Mammary epithelial cell (primary cell): ENCODE measurements at regions of chr2 and their contacts with region 1.

Region 1: DNA sequence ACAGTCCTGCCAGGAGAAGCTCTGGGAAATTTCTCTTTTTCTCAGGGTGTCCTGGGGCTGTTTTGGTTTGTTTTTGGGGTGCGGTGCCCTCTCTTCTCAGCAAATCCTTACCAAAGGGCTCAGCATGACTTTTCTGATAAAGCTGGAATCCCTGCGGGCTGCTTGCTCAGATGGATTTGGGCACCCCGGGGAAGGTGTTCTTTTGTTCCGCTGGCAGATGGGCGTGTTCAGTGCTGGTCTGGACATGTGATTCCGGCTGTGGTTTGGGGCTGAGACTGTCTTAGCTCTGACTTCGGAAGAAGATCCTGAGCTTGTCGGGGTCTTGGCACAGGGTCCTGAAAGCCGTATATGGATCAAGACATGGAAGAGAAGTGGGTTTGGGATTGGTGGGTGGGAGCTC is 134.2 kb upstream of the SPRED2 start:
- DNase-seq: peak; percentile 88
- H3K4me3 ChIP-seq: peak overlapping the region; percentile 43 to 67 (median 49)
- H3K27ac ChIP-seq: peak overlapping the region; percentile 96
- H3K4me1 ChIP-seq: peaks cover 19% of the 10 kb centered on the region
- H3K27me3 ChIP-seq: no peaks in the 10 kb centered on the region
- CTCF ChIP-seq: no peak

Region 2: DNA sequence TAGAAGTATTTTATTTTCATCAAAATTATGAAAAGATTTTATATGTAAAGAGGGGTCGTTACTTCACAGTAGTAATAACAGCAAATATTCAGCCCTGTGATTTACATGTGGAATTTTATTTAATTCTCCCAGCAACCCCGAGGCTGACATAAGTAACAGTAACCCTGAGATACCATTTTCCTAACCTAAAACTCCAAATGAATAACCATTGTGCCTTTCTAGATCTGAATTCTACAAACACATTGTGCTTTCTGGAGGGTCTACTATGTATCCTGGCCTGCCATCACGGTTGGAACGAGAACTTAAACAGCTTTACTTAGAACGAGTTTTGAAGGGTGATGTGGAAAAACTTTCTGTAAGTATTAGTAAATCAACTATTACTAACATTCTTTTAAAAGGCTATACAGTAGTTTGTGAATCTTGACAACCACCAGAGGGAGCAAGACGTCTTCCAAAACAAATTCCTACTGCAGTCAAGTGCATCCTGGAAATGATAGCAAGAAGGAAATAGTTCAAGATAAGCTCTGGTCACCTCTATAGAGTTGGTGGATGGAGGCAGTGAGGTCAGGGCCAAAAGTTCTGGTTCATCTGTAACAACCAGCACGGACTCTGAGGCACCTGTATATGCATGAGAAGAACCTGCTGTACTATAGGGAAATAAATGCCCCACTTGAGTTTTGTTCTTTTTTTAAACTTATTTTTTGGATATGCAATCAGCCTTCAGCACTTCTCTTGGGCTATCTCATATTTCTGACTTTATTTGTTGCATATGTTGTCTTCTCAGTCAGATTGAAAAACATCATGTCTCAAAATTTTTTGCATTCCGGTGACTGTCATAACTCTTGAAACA is 301.6 kb before region 1 on chr2:
- CTCF ChIA-PET with region 1: no interaction called
- dilution Hi-C with region 1: no loop called
- in situ Hi-C with region 1: loop called in 1 of 2 experiments (anchors 5 kb)
- intact Hi-C with region 1: no loop called
- DNase-seq: peak; percentile 51
- H3K4me3 ChIP-seq: no peak overlapping the region
- H3K27ac ChIP-seq: no peak overlapping the region
- H3K4me1 ChIP-seq: no peaks in the 10 kb centered on the region
- H3K27me3 ChIP-seq: no peaks in the 10 kb centered on the region
- CTCF ChIP-seq: peak; percentile 53 to 64

Region 3: GRCh38 chr2:65320042-65320725 is 246.4 kb before region 1 on chr2:
- CTCF ChIA-PET with region 1: no interaction called
- dilution Hi-C with region 1: no loop called
- in situ Hi-C with region 1: no loop called
- intact Hi-C with region 1: loop called (anchors 2 kb)
- DNase-seq: peak; percentile 94
- H3K4me3 ChIP-seq: no peak overlapping the region
- H3K27ac ChIP-seq: peak overlapping the region; percentile 77
- H3K4me1 ChIP-seq: peaks cover 58% of the 10 kb centered on the region
- H3K27me3 ChIP-seq: no peaks in the 10 kb centered on the region
- CTCF ChIP-seq: peak; percentile 45 to 54